Right ventricle myocardium inferior (tissue), 1 donor: ENCODE measurements at regions of chr1 and their contacts with region 1.

Region 1: DNA sequence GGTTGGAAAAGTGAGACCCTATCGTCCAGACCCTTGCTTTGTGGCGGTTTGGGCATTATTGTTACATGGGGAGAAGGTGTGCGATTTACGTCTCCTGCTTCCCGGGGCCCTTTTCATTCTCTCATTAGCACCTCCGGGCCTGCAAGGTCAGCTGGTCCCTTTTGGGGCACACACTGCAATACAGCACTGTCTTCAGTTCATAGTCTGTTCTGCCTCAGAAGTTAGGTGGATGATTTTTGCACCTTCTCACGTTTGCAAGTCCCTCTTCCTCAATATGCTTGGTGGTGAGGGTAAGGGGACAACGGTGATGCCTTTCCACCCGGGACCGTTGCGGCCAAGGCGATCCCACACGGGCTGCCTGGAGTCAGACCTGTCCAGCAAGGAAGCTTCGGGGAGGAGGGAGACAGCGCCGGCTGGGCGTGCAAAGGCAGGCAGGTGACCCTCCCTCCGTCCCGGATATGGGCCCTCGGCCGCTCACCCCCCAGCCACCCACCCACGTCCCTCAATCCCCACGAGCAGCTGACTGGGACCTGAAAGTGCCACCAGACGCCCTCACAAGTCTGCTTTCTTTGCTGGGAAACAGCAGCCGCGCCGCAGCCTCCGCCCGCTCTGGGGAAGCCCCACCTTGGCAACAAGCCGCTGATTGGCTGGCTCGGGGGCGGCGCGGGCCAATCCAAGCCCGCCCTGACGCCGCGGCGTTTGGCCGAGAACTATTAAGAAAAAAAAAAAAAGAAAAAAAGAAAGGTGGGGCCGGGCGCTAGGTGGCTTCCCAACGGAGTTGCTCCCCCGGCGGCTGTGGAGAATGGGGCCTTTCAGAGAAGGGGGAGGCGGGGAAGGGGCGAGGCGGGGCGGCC is 21.7 kb downstream of the BTG2 start:
- DNase-seq: peak; percentile 97
- ATAC-seq: peak; percentile 86

Region 2: DNA sequence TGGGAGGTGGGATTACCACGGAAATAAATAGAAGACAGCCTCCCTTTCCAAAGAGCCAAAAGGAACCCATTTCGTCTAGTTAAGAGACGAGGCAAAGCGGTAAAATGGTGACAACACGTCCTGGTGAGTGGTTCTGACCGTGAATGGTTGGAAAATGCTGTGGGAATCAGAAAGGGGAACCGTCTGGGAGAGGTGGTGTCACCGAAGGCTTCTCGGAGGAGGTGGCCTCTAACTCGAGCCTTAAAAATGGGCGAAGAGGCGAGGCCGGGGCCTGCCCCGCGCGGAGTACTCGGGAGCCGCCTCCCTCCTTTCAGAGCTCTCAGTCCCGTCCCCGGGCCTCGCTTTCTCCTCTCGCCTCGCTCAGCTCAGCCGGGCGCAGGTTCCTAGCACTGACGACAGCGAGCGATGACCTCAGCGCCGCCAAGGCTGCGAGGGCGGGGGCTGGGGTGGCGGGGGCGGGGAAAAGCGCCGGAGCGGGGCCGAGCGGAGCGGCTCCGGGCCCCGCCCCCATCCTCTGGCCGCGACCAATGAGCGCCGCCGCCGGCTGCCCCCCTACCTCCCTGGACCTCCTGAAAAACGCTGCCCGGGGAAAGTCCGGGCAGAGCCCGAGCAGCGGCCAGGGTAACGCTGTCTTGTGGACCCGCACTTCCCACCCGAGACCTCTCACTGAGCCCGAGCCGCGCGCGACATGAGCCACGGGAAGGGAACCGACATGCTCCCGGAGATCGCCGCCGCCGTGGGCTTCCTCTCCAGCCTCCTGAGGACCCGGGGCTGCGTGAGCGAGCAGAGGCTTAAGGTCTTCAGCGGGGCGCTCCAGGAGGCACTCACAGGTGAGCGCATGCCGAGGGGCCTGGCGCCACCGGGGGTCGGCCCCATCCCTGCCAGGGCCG is 21.9 kb before region 1 on chr1 and contains the start of gene BTG2:
- intact Hi-C with region 1: loop called (anchors 2 kb)
- DNase-seq: peak; percentile 96
- ATAC-seq: peak; percentile 94
- total RNA-seq, gene BTG2: 44.8 TPM